Posterior vena cava (tissue), 2 donors: ENCODE measurements at regions of chr10 and their contacts with region 1.

Region 1: DNA sequence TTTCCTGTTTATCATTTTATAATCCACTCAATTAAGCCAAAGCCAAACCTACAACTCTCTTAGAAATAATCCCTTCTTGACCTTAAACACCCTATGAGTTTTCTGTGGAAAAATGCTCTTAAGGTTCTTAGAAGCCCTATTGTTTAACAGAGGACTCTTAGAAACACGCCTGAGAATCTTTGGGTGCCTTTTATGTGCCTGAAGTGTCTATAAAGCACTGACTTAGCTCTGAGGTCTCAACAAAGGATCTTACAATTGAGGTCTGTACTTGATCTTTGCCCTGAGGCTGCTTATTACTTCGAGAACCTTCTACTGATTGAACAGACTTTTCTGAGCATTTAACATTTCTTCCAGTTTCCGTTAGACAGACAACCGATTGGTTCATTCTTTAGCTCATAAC is 353.3 kb upstream of the SORCS1 start:
- DNase-seq: no peak

Region 2: GRCh38 chr10:107477266-107477665 is 40.5 kb before region 1 on chr10:
- intact Hi-C with region 1: no loop called
- DNase-seq: no peak

Region 3: GRCh38 chr10:107576746-107577145 is 58.9 kb after region 1 on chr10:
- intact Hi-C with region 1: no loop called
- DNase-seq: no peak

Region 4: DNA sequence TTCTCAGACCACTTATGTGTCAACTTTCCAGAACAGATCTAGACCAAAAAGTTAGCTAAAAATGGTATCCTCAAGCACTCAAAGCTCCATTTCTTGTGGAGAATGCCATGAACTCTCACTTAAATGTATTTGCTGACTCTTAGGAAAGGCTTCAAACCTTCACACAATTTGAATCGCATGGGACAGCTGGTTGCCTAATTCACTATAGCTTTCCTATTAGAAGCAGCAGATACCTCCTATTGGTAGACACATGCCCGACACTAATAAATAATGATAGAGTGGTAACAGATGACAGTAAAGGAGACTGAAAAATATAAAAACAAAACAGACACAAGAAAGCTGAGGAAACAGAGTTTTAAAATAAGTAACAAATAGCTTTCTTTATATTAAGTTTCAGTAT is 1587.0 kb after region 1 on chr10:
- intact Hi-C with region 1: loop called in 1 of 2 experiments (anchors 5 kb)
- DNase-seq: no peak